ENCODE measurements at regions of chr4 and their contacts with region 1.

Region 1: DNA sequence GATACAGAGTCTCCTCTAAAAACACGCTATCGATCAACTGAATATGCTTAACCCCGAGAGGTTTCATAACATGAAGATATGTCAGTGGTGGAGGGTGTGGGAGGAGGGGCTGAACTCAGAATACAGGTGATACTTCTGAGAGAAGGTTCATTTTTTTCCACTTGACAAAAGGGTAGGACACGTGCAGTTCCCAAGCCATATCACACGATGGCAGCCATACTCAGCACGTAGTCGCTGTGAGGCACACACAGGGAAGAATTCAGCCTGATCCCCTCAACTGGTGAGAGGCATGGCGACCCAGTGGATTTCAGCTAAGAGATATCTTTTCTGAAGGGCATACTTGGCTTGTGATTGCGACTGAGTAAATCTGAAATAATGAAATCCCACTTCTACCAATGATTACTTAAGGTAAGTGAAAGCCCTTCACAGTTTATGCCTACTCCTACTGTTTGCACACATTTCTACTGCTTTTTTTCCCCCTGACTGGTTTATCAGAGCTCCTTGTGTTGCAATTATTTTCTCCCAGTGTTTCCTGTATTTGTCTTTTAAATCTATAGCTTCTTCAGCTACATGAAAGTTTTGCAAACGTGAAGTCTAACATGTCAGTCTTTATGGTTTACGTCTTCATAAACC is 133.1 kb downstream of the CORIN start:
- DNase-seq: no peak
- ATAC-seq: peak; percentile 94

Region 2: DNA sequence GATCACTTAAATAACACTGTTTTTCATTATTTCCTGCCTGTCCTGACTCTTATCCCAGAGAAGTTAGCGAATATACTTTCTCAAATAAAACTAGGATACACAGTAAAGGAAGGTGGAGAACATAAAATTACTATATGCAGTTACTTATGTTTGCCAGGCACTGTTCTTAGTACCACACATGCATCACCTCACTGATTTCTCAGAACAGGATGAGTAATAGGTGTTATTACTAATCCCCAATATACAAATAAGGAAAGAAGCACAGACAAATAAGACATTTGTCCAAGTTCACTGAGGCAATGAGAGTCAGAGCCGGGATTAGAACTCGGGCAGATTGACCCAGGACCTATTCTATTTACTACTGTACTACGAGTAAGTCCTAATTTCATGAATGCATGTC is 41.3 kb after region 1 on chr4:
- intact Hi-C with region 1: loop called (anchors 5 kb)
- DNase-seq: no peak
- ATAC-seq: no peak

Region 3: DNA sequence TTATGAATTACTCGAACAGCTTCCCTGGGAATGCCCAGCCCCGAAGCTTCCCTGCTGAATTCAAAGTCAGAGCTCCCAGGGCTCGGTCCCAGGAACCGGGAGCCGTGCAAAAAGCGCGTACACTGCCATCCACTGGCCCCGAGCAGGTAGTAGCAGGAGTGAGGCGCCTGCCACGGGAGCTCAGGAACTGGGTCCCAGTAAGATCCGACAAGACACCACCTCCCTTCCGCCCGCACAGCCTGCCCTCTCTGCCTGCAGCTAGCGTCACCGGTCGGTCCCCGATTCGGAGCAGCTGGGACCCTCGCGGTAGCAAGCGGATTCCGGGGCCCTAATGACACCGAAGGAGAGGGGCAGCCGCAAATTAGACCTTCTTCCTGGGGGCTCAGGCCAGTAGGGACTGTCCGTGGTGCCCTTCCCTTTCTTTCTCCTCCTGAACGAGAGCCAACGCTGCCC is 131.9 kb after region 1 on chr4:
- intact Hi-C with region 1: loop called (anchors 1 kb)
- DNase-seq: peak; percentile 85
- ATAC-seq: peak; percentile 91